ENCODE measurements at regions of chr17 and their contacts with region 1.

Region 1: DNA sequence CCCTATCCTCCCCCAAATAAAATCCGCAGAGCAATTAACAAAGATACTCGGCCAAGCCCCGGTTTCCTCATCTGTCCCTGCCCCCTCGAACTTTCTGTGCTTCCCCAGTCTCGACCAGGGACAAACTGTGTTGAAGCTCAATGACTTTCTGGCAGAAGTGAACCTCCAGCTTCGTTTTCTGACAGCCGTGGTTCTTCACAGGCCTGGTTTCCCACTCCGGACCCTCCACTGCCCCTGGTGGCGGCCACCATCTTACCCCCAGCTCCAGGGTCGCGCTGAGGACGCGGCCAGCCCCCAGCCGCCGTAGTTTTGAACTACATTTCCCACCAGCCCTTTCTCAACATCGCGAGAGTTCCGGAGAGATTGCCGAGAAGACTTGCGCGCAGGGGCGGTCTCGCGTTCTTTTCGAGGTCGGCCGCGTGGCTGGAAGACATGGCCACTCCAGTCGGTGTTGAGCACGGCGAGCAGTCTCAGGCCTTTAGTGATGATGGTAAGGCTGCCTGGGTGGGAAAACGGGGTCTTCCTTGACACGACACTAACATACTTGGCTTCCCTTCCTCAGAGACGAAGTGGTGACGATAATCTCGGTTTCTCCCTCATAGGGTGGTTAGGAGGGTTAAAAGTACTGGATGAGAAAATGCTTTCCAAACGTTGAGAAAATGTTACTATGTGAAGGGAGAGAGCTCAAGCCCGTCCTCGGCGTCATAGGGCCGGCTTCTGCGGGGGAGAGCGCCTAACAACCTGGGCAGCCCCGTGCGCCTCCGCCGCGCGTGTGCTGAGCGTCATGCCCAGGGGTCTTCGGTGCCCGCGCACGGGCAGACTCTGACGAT is 17.7 kb downstream of the PRCD start:
- DNase-seq: peak; percentile 86 to 97 (median 92)
- ATAC-seq: peak; percentile 78
- H3K4me3 ChIP-seq: peak overlapping the region; percentile 70 to 75
- H3K4me3 Mint-ChIP-seq: peak overlapping the region; percentile 95
- H3K27ac ChIP-seq: peak overlapping the region; percentile 81 to 95
- H3K27ac Mint-ChIP-seq: peak overlapping the region; percentile 97
- H3K4me1 ChIP-seq: peaks cover 49% of the 10 kb centered on the region
- H3K4me1 Mint-ChIP-seq: peaks cover 63% of the 10 kb centered on the region
- H3K27me3 ChIP-seq: no peaks in the 10 kb centered on the region
- H3K27me3 Mint-ChIP-seq: no peaks in the 10 kb centered on the region
- CTCF ChIP-seq: peak; percentile 35

Region 2: GRCh38 chr17:76452660-76453430 is 104.7 kb before region 1 on chr17 and contains the start of gene UBE2O:
- CTCF ChIA-PET with region 1: interaction called, 3 read pairs
- POLR2A ChIA-PET with region 1: no interaction called
- intact Hi-C with region 1: loop called (anchors 1 kb)
- DNase-seq: peak; percentile 84 to 96 (median 94)
- ATAC-seq: peak; percentile 92
- H3K4me3 ChIP-seq: peak within 1 kb of the TSS; percentile 49 to 78
- H3K4me3 Mint-ChIP-seq: peak within 1 kb of the TSS; percentile 85
- H3K27ac ChIP-seq: peak within 1 kb of the TSS; percentile 50 to 64
- H3K27ac Mint-ChIP-seq: peak within 1 kb of the TSS; percentile 78
- H3K4me1 ChIP-seq: peaks cover 22% of the 10 kb centered on the region
- H3K4me1 Mint-ChIP-seq: peaks cover 39% of the 10 kb centered on the region
- H3K27me3 ChIP-seq: no peaks in the 10 kb centered on the region
- H3K27me3 Mint-ChIP-seq: no peaks in the 10 kb centered on the region
- CTCF ChIP-seq: peak; percentile 39
- total RNA-seq, gene UBE2O: 29.8 to 32.7 TPM

Region 3: DNA sequence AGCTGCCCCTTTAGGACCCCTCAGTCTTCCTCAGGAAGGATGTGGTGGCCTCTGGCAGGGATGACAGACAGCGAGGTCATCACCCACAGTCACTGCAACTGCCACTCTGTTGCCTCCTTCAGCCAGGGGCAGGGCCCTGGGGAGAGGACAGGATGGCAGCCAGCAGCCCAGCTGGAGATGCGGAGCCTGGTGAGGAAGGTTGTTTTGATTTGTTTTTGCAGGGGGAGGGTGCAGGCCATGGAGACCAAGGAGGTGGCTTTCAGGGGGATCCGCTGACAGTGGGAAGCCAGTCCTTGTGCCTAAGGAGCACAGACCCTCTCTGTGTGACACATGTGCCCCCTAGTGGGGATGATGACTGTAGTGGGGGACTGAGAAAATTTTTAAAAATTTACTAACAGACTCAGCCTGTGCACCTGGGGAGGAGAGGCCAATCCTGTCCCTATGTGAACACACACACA is 10.4 kb before region 1 on chr17:
- CTCF ChIA-PET with region 1: interaction called, 32 read pairs
- POLR2A ChIA-PET with region 1: no interaction called
- intact Hi-C with region 1: no loop called
- DNase-seq: peak; percentile 30 to 83 (median 72)
- ATAC-seq: peak; percentile 94
- H3K4me3 ChIP-seq: no peak overlapping the region
- H3K4me3 Mint-ChIP-seq: no peak overlapping the region
- H3K27ac ChIP-seq: no peak overlapping the region
- H3K27ac Mint-ChIP-seq: no peak overlapping the region
- H3K4me1 ChIP-seq: peaks cover 7% of the 10 kb centered on the region
- H3K4me1 Mint-ChIP-seq: peaks cover 11% of the 10 kb centered on the region
- H3K27me3 ChIP-seq: no peaks in the 10 kb centered on the region
- H3K27me3 Mint-ChIP-seq: peaks cover 8% of the 10 kb centered on the region
- CTCF ChIP-seq: peak; percentile 62

Region 4: GRCh38 chr17:76567634-76568432 is 10.2 kb after region 1 on chr17:
- CTCF ChIA-PET with region 1: interaction called, 19 read pairs
- POLR2A ChIA-PET with region 1: interaction called, 6 read pairs
- intact Hi-C with region 1: no loop called
- DNase-seq: peak in 2 of 9 experiments; percentile 50 to 69
- ATAC-seq: peak; percentile 35
- H3K4me3 ChIP-seq: no peak overlapping the region
- H3K4me3 Mint-ChIP-seq: no peak overlapping the region
- H3K27ac ChIP-seq: peak overlapping the region in 1 of 2 experiments; percentile 28
- H3K27ac Mint-ChIP-seq: peak overlapping the region; percentile 60
- H3K4me1 ChIP-seq: peaks cover 19% of the 10 kb centered on the region
- H3K4me1 Mint-ChIP-seq: peaks cover 39% of the 10 kb centered on the region
- H3K27me3 ChIP-seq: no peaks in the 10 kb centered on the region
- H3K27me3 Mint-ChIP-seq: no peaks in the 10 kb centered on the region
- CTCF ChIP-seq: no peak

Region 5: GRCh38 chr17:76671123-76671911 is 113.7 kb after region 1 on chr17:
- CTCF ChIA-PET with region 1: interaction called, 6 read pairs
- POLR2A ChIA-PET with region 1: interaction called, 7 read pairs
- intact Hi-C with region 1: loop called (anchors 2 kb)
- DNase-seq: peak; percentile 96 to 100 (median 99)
- ATAC-seq: peak; percentile 97
- H3K4me3 ChIP-seq: peak overlapping the region; percentile 76 to 79
- H3K4me3 Mint-ChIP-seq: peak overlapping the region; percentile 90
- H3K27ac ChIP-seq: peak overlapping the region; percentile 71 to 90
- H3K27ac Mint-ChIP-seq: peak overlapping the region; percentile 96
- H3K4me1 ChIP-seq: peaks cover 39% of the 10 kb centered on the region
- H3K4me1 Mint-ChIP-seq: peaks cover 49% of the 10 kb centered on the region
- H3K27me3 ChIP-seq: no peaks in the 10 kb centered on the region
- H3K27me3 Mint-ChIP-seq: no peaks in the 10 kb centered on the region
- CTCF ChIP-seq: no peak